Right ventricle myocardium inferior (tissue), 1 donor: ENCODE measurements at regions of chr10 and their contacts with region 1.

Region 1: DNA sequence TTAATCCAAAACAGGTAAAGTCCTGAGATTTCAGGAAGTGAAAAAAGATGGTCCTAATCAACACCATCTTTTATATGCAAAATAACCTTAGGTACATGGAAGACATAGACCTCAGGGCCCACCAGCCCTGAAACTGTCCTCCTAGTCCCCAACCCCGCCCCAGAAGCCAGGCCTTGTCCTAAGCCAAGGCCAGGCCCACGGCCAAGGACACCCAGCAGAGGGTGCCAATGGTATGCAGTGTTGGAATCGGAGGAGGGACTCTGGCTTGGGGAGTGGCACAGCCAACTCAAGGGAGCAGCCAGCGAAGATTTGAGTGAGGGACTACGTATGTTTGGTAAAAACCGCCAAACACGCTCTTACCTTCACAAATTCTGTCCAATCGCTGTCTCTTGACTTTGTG is 96.7 kb downstream of the ZRANB1 start:
- DNase-seq: no peak
- ATAC-seq: peak; percentile 91

Region 2: DNA sequence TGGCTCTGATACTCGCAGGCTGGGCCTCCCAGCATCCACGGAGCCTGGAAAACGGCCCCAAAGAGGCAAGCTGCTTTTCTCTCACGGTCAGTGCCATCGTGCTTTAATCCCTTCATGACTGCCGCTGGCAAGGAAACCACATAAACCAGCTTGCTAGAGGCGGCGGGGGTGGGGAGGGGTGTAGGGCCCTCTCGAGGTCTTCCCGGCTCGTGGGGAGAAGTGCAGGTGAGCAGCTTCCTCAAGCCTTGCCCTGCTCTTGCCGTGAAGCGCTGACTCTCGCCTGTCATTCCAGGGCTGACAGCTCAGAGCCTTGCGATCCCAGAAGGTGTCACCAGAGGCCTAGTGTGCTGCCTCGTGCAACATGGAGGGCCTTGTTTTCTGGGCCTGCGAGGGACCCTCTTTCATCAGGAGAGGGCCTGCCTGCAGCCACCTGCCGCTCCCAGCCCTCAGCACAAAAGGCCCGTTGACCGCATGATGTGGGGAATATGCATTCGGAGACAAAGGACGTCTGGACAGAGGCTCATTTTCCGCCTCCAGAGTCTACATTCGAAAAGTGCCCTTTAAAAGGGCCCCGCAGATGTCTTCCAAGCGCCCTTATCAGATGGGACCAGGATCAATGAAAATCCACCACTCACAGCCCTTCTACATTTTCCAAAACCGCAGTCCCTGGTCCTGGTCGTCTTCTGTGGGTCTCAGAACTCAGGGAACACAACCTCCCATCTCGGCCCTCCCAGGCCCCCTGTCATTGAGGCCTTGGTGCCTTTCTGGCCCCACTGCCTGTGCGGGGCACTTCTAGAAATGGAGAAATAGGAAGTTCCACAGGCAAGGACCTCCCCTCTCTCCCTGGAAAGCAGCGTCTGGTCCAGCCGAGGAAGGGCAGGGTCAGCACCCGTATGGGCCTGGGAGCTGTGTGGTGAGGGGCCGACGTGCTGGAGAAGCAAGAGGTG is 38.0 kb before region 1 on chr10:
- intact Hi-C with region 1: loop called (anchors 5 kb)
- DNase-seq: no peak
- ATAC-seq: peak; percentile 25

Region 3: GRCh38 chr10:125118011-125118611 is 79.5 kb after region 1 on chr10:
- intact Hi-C with region 1: no loop called
- DNase-seq: no peak
- ATAC-seq: peak; percentile 45

Region 4: DNA sequence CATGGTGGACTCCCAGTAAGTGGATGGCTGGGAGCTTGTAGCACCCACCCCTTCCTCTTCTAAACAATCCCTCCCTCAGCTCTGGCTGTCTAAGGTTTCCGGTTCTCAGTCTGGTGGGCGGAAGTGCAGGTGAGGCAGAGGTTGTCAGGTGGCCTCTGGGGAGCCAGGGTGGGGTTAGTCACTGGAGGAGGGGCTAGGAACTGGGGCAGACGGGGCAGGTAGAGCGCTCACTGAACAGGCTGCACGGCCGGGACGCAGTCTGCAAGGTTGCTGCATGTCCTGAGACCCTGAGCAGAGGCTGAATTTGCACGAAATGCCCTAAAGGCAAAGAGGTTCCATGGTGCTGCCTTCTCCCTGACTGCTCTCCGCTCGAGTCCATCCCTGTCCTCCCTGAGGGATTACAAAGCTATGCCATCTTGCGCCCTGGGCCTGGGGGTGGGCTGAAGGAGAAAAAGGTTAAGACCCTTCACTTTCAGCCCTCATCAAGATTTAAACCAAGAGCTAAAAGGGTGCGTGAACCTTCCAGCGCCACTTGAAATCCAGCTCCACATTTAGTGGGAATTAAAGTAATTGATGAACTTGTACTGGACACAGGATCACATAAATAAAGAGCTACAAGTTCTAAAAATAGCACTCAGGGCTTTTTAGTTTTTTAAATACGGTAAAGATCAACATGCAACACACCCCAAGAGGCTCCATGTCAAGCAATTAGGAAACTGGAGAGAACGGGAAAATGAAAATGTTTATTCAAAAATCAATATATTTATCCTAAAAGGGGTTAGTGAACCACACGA is 184.1 kb after region 1 on chr10:
- intact Hi-C with region 1: loop called (anchors 5 kb)
- DNase-seq: no peak
- ATAC-seq: no peak